Endothelial cell of umbilical vein (primary cell): ENCODE measurements at regions of chr10 and their contacts with region 1.

Region 1: DNA sequence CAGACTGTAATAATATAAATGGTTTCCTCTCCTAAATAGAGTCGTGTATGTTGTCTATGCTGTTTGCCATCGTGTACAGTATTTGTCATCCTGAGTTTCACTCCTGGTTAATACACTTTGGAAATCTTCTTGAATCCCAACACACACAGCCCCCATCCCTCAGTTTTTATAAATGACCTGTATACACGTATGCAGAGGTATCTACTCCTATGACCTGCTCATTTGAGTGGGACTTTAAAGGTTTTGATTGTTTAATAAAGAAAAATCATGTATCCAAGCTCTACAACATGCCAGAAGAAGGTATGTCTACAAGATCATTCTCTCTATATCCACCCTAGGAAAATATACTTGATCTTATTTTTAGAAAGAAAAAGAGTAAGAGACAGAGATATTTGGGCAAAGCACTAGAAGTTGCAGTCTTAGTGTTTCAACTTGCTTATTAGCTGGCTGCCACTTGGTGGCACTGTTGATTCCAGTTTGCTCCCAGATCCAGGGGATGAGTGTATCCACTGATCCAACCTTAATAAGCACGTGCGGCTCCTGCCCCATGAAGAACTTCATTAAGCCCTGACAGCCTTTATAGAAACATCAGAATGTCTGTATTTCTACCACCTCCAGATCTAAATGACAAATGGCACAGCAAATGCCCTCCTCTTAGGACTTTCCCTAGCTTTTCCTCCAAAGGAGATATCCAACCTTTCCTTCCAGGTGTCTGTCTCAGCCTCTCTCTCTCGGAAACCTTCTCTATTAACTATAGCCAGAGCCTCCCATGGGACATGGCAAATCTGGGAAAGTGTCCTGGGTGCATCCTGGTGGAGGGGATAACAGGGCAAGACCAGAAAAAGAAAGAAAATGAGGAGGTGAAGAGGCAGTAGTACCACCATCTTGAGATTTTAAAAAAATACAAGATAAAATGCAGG is 181.6 kb upstream of the NEBL start:
- DNase-seq: peak; percentile 72
- H3K4me3 ChIP-seq: no peak overlapping the region
- H3K27ac ChIP-seq: no peak overlapping the region
- H3K4me1 ChIP-seq: no peaks in the 10 kb centered on the region
- H3K27me3 ChIP-seq: peaks cover 5 to 8% of the 10 kb centered on the region in 2 experiments
- CTCF ChIP-seq: peak; percentile 67 to 73
- POLR2A ChIP-seq: no peak

Region 2: DNA sequence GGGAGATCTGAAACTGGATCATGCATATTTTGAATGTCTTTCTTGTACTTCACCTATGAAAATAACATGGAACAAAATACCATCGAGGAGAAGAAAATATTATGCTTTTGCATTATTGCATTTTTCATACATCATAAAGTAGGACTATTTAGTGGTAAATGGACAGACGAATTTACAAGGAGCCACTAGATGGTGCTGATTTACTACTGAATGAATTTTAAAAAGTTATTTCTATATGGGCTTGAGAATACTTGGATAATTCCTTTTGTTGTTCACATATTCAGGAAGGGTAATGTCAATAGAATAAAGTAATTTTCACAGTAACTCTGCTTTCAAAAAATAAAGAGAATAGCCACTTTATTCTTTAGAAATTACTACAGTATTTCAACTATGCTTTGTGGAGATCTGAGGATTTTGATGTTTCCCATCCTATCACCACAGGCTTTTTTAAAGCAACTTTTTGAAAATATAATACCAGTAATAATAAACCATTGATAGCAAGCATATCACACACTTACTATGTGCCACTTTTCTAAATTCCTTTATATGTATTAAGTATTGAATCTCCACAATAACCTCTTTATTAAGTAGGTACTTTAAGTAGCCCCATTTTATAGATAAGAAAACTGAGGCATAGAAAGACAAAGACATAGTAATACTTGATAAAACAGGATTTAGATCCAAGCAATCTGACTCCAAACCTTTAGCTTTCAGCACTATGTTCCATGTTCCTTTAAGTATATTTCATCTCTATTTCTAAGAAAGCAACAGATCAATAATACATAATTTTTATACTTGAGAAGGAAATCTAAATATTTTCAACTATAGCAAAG is 220.2 kb before region 1 on chr10:
- CTCF ChIA-PET with region 1: interaction called, 7 read pairs
- POLR2A ChIA-PET with region 1: no interaction called
- dilution Hi-C with region 1: no loop called
- intact Hi-C with region 1: loop called (anchors 1 kb)
- DNase-seq: peak; percentile 49
- H3K4me3 ChIP-seq: no peak overlapping the region
- H3K27ac ChIP-seq: no peak overlapping the region
- H3K4me1 ChIP-seq: no peaks in the 10 kb centered on the region
- H3K27me3 ChIP-seq: no peaks in the 10 kb centered on the region
- CTCF ChIP-seq: peak; percentile 21 to 36
- POLR2A ChIP-seq: no peak

Region 3: DNA sequence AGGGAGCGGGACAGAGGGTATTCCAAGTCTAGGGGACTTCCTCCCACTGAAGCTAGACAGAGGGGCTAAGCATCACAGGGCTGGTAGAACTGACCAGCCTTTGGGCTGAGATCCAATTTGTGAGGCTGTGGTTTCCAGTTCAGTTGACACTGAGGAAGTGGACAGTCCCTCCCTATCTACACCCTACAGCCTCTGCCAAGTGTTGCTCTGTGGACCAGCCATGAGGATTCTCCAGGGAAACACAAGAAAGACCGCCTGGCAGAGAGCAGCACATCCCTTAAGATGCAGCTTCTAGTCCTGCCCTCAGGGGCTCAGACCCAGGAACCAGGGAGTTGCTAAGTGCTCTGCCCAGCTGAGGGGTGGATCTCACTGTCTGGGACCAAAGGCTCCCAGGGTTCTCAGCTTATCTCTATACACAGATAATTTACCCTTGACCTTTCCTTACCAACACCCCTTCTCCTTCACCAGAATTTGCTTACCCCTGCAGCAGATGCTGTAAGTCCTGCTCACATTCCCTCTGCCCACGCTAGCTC is 194.8 kb after region 1 on chr10:
- CTCF ChIA-PET with region 1: interaction called, 96 read pairs
- POLR2A ChIA-PET with region 1: no interaction called
- dilution Hi-C with region 1: no loop called
- intact Hi-C with region 1: loop called (anchors 1 kb)
- DNase-seq: no peak
- H3K4me3 ChIP-seq: no peak overlapping the region
- H3K27ac ChIP-seq: no peak overlapping the region
- H3K4me1 ChIP-seq: peaks cover 3% of the 10 kb centered on the region
- H3K27me3 ChIP-seq: no peaks in the 10 kb centered on the region
- CTCF ChIP-seq: no peak
- POLR2A ChIP-seq: no peak

Region 4: DNA sequence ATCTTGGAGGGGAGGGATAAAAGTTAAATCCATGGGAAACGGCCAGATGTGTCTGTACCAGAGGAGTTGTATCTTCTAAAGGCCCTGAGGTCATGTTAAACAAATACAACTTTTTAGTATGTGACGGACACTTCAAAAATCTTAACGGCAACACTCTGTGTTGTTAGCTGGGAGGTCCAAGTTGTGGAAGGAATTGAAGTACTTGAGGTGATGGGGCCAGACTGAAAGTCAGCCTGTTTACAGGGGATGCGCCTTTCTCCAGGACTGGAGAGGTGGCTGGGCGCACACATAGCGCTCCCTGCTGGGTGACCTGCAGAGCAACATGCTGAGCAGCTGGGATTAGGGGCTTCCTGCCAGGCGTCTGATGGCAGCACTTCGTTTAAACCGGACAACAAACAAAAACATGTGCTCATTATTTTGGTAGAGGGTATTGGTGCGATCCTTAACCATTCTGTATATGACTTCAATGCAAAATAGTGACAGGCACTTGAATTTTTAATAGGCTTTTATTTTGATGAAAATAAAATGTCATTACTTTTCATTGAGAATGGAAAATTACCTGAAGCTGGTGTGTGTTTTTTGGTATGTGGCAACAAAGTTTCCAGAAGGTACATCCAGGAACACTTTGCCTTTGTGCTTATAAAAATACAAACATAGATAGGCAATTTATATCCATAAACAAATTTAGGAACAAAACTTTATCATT is 653.5 kb after region 1 on chr10:
- CTCF ChIA-PET with region 1: interaction called, 5 read pairs
- POLR2A ChIA-PET with region 1: no interaction called
- dilution Hi-C with region 1: no loop called
- intact Hi-C with region 1: loop called (anchors 2 kb)
- DNase-seq: peak; percentile 78
- H3K4me3 ChIP-seq: no peak overlapping the region
- H3K27ac ChIP-seq: no peak overlapping the region
- H3K4me1 ChIP-seq: peaks cover 20% of the 10 kb centered on the region
- H3K27me3 ChIP-seq: no peaks in the 10 kb centered on the region
- CTCF ChIP-seq: peak; percentile 93 to 95
- POLR2A ChIP-seq: no peak

Region 5: GRCh38 chr10:21953585-21954057 is 875.0 kb after region 1 on chr10:
- CTCF ChIA-PET with region 1: interaction called, 7 read pairs
- POLR2A ChIA-PET with region 1: no interaction called
- dilution Hi-C with region 1: no loop called
- intact Hi-C with region 1: loop called (anchors 5 kb)
- DNase-seq: peak; percentile 70
- H3K4me3 ChIP-seq: no peak overlapping the region
- H3K27ac ChIP-seq: no peak overlapping the region
- H3K4me1 ChIP-seq: no peaks in the 10 kb centered on the region
- H3K27me3 ChIP-seq: no peaks in the 10 kb centered on the region
- CTCF ChIP-seq: peak in 1 of 2 donors; percentile 9
- POLR2A ChIP-seq: no peak

Region 6: DNA sequence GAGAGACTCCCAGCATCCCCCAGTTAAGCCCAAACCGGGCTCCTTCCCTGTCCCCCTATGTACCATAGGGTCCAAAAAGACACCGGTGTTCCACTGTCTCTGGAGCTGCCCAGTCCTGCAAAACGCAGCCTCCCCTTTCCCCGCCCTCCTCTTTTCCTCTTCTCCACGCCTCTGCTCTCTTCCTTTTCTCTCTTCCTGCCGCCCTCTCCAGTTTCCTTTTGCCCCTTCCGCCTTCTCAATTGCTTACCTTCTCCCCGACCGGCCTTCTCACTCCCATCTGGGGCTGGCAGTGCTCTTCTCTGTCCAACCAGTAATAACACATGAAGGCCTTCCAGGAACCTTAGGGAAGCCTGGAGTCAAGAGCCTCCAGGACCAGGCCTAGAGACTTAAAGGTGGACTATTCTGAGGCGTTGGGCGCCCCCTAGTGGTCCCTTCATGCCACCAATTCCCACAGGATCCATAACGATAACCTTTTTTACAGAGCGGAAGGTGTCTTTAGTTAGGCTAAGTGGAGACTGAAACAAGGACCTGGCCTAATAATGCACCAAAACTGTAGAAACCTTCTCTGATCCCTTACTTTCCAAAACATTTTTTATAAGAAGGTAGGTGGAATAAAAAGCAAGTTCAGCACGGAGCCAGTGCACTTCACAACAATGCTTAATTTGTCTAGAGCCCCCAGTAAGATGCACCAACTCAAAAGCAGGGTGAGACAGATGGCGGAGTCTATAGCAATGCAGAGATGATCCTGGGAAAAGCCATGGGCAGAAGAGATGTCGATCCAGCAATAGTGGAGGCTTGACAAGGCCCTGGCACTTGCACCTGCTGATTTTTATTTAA is 1989.5 kb after region 1 on chr10:
- CTCF ChIA-PET with region 1: no interaction called
- POLR2A ChIA-PET with region 1: no interaction called
- dilution Hi-C with region 1: no loop called
- intact Hi-C with region 1: loop called (anchors 2 kb)
- DNase-seq: peak; percentile 65
- H3K4me3 ChIP-seq: no peak overlapping the region
- H3K27ac ChIP-seq: no peak overlapping the region
- H3K4me1 ChIP-seq: no peaks in the 10 kb centered on the region
- H3K27me3 ChIP-seq: no peaks in the 10 kb centered on the region
- CTCF ChIP-seq: peak; percentile 70 to 83
- POLR2A ChIP-seq: no peak